ENCODE measurements at regions of chr10 and their contacts with region 1.

Region 1: GRCh38 chr10:128150045-128150493 is 23.8 kb upstream of the MKI67 start:
- DNase-seq: peak; percentile 72
- H3K4me3 Mint-ChIP-seq: peak overlapping the region; percentile 65
- H3K27ac Mint-ChIP-seq: no peak overlapping the region
- H3K4me1 Mint-ChIP-seq: peaks cover 19% of the 10 kb centered on the region
- H3K27me3 Mint-ChIP-seq: peaks cover 39% of the 10 kb centered on the region

Region 2: GRCh38 chr10:127618797-127619196 is 531.3 kb before region 1 on chr10:
- intact Hi-C with region 1: no loop called
- DNase-seq: no peak
- H3K4me3 Mint-ChIP-seq: no peak overlapping the region
- H3K27ac Mint-ChIP-seq: no peak overlapping the region
- H3K4me1 Mint-ChIP-seq: no peaks in the 10 kb centered on the region
- H3K27me3 Mint-ChIP-seq: no peaks in the 10 kb centered on the region

Region 3: GRCh38 chr10:128064108-128064969 is 85.7 kb before region 1 on chr10:
- intact Hi-C with region 1: loop called (anchors 2 kb)
- DNase-seq: peak; percentile 51
- H3K4me3 Mint-ChIP-seq: peak overlapping the region; percentile 68
- H3K27ac Mint-ChIP-seq: peak overlapping the region; percentile 93
- H3K4me1 Mint-ChIP-seq: peaks cover 60% of the 10 kb centered on the region
- H3K27me3 Mint-ChIP-seq: no peaks in the 10 kb centered on the region

Region 4: GRCh38 chr10:128078136-128078969 is 71.7 kb before region 1 on chr10:
- intact Hi-C with region 1: loop called (anchors 1 kb)
- DNase-seq: no peak
- H3K4me3 Mint-ChIP-seq: no peak overlapping the region
- H3K27ac Mint-ChIP-seq: no peak overlapping the region
- H3K4me1 Mint-ChIP-seq: peaks cover 11% of the 10 kb centered on the region
- H3K27me3 Mint-ChIP-seq: no peaks in the 10 kb centered on the region

Region 5: DNA sequence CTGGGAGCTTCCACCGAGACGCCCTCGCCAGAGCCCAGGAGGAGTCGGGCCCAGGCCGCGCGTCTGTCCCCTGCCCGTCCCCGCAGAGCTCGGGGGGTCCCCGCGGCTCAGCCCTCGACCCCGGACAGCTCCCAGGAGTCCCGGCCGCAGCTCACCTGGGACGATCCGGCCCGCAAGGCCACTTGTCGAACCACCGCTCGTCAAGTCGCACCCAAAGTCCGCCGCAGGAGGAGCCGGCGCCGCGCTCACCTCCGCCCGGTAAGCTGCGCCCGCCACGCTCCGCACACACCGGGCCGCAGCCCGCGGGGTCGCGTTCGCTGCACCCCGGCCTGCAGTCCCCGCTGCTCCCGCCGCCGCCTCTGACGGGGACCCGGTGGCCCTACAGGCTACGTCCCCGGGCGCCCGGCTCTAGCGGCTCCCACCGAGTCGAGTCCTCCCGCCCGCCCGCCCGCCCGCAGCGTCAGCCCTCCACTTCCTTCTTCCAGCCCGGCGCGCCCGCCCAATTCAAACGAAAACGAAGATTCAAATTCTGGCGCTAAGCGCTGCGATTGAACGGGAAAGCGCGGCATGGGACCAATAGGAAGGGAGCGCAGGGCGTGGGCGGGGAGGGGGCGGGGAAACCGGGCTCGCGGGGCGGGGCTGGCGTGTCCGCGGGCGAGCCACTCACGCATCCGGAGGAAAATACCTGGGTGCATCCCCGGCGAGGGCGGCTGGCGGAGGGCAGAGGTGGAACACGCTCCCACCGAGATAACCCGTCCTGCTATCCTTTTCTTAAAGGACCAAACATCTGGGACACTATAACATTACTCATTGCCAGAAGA is 23.9 kb before region 1 on chr10 and contains the start of gene MKI67:
- intact Hi-C with region 1: loop called (anchors 1 kb)
- DNase-seq: peak; percentile 89
- H3K4me3 Mint-ChIP-seq: peak within 1 kb of the TSS; percentile 97
- H3K27ac Mint-ChIP-seq: peak within 1 kb of the TSS; percentile 91
- H3K4me1 Mint-ChIP-seq: peaks cover 39% of the 10 kb centered on the region
- H3K27me3 Mint-ChIP-seq: peaks cover 4% of the 10 kb centered on the region
- total RNA-seq, gene MKI67: 163 and 165 TPM in 2 replicates

Region 6: DNA sequence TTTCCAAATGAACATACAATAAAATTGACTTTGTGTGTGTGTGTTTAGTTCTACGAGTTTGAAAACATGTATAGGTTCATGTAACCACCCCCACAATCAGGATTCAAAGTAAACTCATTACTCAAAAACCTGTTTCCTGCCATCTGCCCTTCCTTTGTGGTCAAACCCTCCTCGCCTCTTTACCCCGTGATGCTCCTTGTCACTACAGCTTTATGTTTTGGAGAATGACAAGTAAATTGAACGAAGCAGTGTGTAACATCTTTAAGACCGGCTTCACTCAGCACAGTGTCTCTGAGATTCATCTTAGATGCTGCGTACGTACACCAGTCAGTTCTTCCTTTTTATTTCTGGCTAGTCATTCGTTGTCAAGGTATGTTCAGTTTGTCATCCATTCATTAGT is 30.8 kb after region 1 on chr10:
- intact Hi-C with region 1: loop called (anchors 2 kb)
- DNase-seq: peak; percentile 63
- H3K4me3 Mint-ChIP-seq: peak overlapping the region; percentile 66
- H3K27ac Mint-ChIP-seq: peak overlapping the region; percentile 69
- H3K4me1 Mint-ChIP-seq: peaks cover 36% of the 10 kb centered on the region
- H3K27me3 Mint-ChIP-seq: peaks cover 18% of the 10 kb centered on the region